ENCODE measurements at regions of chr2 and their contacts with region 1.

Region 1: DNA sequence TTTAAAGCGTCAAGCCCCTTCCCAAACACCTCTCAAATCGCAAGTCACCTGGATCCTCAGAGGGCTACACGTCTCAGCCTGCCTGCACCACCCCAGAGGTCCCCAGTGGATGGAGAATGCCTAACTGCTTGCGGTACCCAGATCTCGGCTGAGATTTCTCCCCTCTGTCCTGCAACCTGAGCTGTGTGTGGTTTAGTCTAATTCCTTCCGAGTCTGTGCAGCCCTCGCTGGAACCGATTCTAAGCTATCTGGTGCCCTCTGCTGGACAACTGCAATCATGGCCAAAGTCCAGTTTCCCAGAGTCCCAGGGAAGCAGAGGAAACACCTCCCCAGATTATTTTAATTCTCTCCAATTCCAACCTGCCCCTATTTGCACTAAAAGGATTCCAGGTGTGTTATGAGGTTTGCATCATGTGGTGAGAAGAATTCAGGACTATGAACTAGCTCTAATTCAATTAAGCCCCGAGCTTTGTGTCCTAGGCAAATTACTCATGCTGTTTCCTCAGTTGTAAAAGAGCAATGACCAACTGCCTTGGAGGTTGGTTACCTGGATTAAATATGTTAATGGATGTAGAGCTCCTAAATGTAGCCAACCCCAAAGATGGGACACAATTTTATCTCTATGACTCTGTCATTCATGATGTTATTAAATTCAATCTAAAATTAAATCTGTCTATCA is 276.1 kb upstream of the NCKAP5 start:
- DNase-seq: peak; percentile 88
- ATAC-seq: peak; percentile 83
- H3K4me3 ChIP-seq: no peak overlapping the region
- H3K27ac ChIP-seq: peak overlapping the region; percentile 56
- H3K4me1 ChIP-seq: peaks cover 19% of the 10 kb centered on the region
- H3K27me3 ChIP-seq: no peaks in the 10 kb centered on the region
- CTCF ChIP-seq: peak; percentile 96
- POLR2A ChIP-seq: peak; percentile 61
- RAD21 ChIP-seq: peak; percentile 99

Region 2: GRCh38 chr2:132547074-132547687 is 1297.2 kb before region 1 on chr2:
- CTCF ChIA-PET with region 1: interaction called, 3 read pairs
- POLR2A ChIA-PET with region 1: no interaction called
- dilution Hi-C with region 1: no loop called
- in situ Hi-C with region 1: loop called (anchors 5 kb)
- intact Hi-C with region 1: loop called (anchors 1 kb)
- DNase-seq: peak; percentile 85
- ATAC-seq: peak; percentile 67
- H3K4me3 ChIP-seq: no peak overlapping the region
- H3K27ac ChIP-seq: no peak overlapping the region
- H3K4me1 ChIP-seq: peaks cover 3% of the 10 kb centered on the region
- H3K27me3 ChIP-seq: no peaks in the 10 kb centered on the region
- CTCF ChIP-seq: peak; percentile 78
- POLR2A ChIP-seq: no peak
- RAD21 ChIP-seq: peak; percentile 85

Region 3: GRCh38 chr2:132670496-132671150 is 1173.7 kb before region 1 on chr2:
- CTCF ChIA-PET with region 1: no interaction called
- POLR2A ChIA-PET with region 1: interaction called, 4 read pairs
- dilution Hi-C with region 1: no loop called
- in situ Hi-C with region 1: loop called (anchors 25 kb)
- intact Hi-C with region 1: loop called (anchors 10 kb)
- DNase-seq: no peak
- ATAC-seq: peak; percentile 30
- H3K4me3 ChIP-seq: peak overlapping the region; percentile 69
- H3K27ac ChIP-seq: peak overlapping the region; percentile 56
- H3K4me1 ChIP-seq: peaks cover 9% of the 10 kb centered on the region
- H3K27me3 ChIP-seq: no peaks in the 10 kb centered on the region
- CTCF ChIP-seq: no peak
- POLR2A ChIP-seq: no peak
- RAD21 ChIP-seq: no peak

Region 4: DNA sequence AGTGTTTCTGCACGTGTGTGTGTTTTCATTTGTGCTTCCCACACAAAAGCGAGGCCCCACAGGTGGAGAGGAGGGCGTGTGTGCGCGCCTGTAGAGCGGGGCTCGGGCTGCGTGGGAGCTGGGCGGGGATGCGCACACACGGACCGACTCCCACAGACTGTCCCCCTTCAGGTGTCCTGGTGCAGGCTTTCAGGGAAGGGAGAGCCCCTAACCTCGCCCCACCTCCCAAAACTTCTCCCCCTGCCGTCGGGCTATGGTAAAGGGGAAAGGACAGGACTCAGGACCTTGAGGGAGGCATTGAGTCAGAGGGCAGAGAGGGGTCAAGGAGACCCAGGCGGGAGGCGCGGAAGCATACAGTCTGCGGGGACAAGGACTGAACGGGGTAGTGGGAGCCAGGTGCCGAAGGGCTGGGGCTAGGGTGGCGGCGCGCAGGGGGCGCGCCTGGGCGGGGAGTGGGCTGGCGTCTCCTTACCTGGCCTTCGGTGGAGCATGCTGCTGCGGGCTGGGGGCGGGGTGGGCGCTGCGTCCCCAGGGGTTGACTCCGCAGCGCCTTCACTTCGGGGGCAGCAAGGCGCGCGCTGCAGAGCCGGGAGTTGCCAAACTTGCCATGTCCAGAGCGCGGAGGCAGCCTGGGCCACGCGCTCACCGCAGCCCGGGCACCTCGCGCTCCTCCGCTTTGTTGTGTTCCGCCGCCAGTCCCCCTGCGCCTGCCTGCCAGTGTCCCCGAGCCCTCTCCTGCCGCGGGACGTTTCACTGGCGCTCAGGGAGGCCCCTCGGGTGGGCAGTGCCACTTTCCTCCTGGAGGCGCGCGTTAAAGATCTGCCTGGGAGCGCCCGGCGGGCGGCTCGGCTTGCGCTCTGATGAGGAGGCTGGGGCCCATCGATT is 578.1 kb before region 1 on chr2:
- CTCF ChIA-PET with region 1: no interaction called
- POLR2A ChIA-PET with region 1: no interaction called
- dilution Hi-C with region 1: no loop called
- in situ Hi-C with region 1: no loop called
- intact Hi-C with region 1: loop called (anchors 5 kb)
- DNase-seq: no peak
- ATAC-seq: peak; percentile 38
- H3K4me3 ChIP-seq: peak overlapping the region; percentile 63
- H3K27ac ChIP-seq: peak overlapping the region; percentile 96
- H3K4me1 ChIP-seq: peaks cover 25% of the 10 kb centered on the region
- H3K27me3 ChIP-seq: no peaks in the 10 kb centered on the region
- CTCF ChIP-seq: 0 out of 2 replicates have a peak, but pooled peaks have one; percentile 13
- POLR2A ChIP-seq: no peak
- RAD21 ChIP-seq: no peak

Region 5: GRCh38 chr2:133561045-133561852 is 283.1 kb before region 1 on chr2:
- CTCF ChIA-PET with region 1: interaction called, 14 read pairs
- POLR2A ChIA-PET with region 1: no interaction called
- dilution Hi-C with region 1: no loop called
- in situ Hi-C with region 1: loop called (anchors 5 kb)
- intact Hi-C with region 1: loop called (anchors 2 kb)
- DNase-seq: peak; percentile 90
- ATAC-seq: peak; percentile 91
- H3K4me3 ChIP-seq: no peak overlapping the region
- H3K27ac ChIP-seq: no peak overlapping the region; the same call in 1 of the 2 replicates
- H3K4me1 ChIP-seq: peaks cover 15% of the 10 kb centered on the region
- H3K27me3 ChIP-seq: no peaks in the 10 kb centered on the region
- CTCF ChIP-seq: peak; percentile 81
- POLR2A ChIP-seq: no peak
- RAD21 ChIP-seq: peak; percentile 89

Region 6: GRCh38 chr2:133674433-133675331 is 169.7 kb before region 1 on chr2:
- CTCF ChIA-PET with region 1: no interaction called
- POLR2A ChIA-PET with region 1: no interaction called
- dilution Hi-C with region 1: no loop called
- in situ Hi-C with region 1: no loop called
- intact Hi-C with region 1: loop called (anchors 5 kb)
- DNase-seq: peak; percentile 90
- ATAC-seq: peak; percentile 82
- H3K4me3 ChIP-seq: peak overlapping the region; percentile 41
- H3K27ac ChIP-seq: peak overlapping the region; percentile 96
- H3K4me1 ChIP-seq: peaks cover 20% of the 10 kb centered on the region
- H3K27me3 ChIP-seq: no peaks in the 10 kb centered on the region
- CTCF ChIP-seq: no peak
- POLR2A ChIP-seq: no peak
- RAD21 ChIP-seq: no peak

Region 7: DNA sequence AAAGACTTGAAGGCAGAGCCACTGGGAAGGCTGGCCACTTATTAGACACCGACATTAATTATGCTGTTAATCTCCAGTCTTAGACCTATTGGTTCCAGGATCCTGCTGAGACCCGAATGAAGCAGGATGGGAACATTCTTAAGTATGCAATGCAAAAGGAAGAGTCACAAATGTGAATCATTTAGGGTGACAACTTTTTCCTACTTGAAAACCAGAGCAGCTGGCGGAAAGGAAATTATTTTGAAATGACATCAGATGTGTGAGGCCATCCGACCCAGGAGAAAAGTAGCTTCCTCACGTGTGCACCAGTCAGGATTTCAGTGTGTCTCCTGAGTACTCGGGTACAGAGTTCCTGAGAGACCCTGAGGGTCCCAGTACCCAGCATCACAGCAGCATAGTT is 53.2 kb before region 1 on chr2:
- CTCF ChIA-PET with region 1: interaction called, 3 read pairs
- POLR2A ChIA-PET with region 1: no interaction called
- dilution Hi-C with region 1: no loop called
- in situ Hi-C with region 1: no loop called
- intact Hi-C with region 1: loop called (anchors 2 kb)
- DNase-seq: peak; percentile 90
- ATAC-seq: peak; percentile 66
- H3K4me3 ChIP-seq: no peak overlapping the region
- H3K27ac ChIP-seq: peak overlapping the region; percentile 52
- H3K4me1 ChIP-seq: peaks cover 18% of the 10 kb centered on the region
- H3K27me3 ChIP-seq: no peaks in the 10 kb centered on the region
- CTCF ChIP-seq: no peak
- POLR2A ChIP-seq: no peak
- RAD21 ChIP-seq: no peak

Measured in IMR-90 (cell line).